Colonic mucosa (tissue), 4 donors: ENCODE measurements at regions of chr3 and their contacts with region 1.

Region 1: GRCh38 chr3:14678015-14678503 is 3.1 kb downstream of the C3orf20 start:
- DNase-seq: no peak
- H3K4me3 ChIP-seq: no peak overlapping the region
- H3K27ac ChIP-seq: no peak overlapping the region
- H3K4me1 ChIP-seq: no peaks in the 10 kb centered on the region
- H3K27me3 ChIP-seq: no peaks in the 10 kb centered on the region
- CTCF ChIP-seq: no peak

Region 2: GRCh38 chr3:14774431-14774830 is 96.4 kb after region 1 on chr3:
- intact Hi-C with region 1: loop called (anchors 10 kb)
- DNase-seq: peak; percentile 9
- H3K4me3 ChIP-seq: no peak overlapping the region
- H3K27ac ChIP-seq: no peak overlapping the region
- H3K4me1 ChIP-seq: no peaks in the 10 kb centered on the region
- H3K27me3 ChIP-seq: no peaks in the 10 kb centered on the region
- CTCF ChIP-seq: no peak

Region 3: GRCh38 chr3:14836049-14836468 is 158.0 kb after region 1 on chr3:
- intact Hi-C with region 1: no loop called
- DNase-seq: peak; percentile 48
- H3K4me3 ChIP-seq: no peak overlapping the region
- H3K27ac ChIP-seq: peak overlapping the region; percentile 22
- H3K4me1 ChIP-seq: no peaks in the 10 kb centered on the region
- H3K27me3 ChIP-seq: no peaks in the 10 kb centered on the region
- CTCF ChIP-seq: no peak